Posterior vena cava (tissue), 2 donors: ENCODE measurements at regions of chr1 and their contacts with region 1.

Region 1: DNA sequence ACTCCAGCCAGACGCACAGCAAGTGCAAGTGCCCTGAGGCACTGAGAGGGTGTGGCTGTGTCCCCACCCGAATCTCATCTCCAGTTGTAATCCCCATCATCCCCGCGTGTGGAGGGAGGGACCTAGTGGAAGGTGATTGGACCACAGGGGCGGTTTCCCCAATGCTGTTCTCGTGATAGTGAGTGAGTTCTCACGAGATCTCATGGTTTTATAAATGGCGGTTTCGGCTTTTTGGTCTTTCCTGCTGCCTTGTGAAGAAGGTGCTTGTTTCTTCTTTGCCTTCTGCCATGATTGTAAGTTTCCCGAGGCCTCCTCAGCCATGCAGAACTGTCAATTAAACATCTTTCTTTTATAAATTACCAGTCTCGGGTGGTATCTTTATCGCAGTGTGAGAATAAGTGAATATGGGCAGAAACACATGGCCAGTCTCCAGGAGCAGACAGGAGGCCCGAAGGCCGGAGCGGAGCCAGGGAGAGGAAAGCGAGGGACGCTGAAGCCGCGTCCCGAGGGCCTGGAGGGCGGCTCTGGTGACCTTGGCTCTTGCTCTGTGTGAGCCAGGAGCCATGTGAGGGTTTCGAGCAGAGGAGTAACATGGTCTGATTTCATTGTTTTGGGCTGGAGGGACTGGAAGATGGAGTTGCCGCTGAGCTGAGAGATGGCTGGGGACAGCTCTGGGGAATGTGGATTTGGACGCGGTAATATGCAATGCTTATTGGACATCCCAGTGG is 76.0 kb upstream of the C1orf174 start:
- DNase-seq: no peak

Region 2: GRCh38 chr1:3942818-3943431 is 33.1 kb before region 1 on chr1:
- intact Hi-C with region 1: loop called in 1 of 2 experiments (anchors 1 kb)
- DNase-seq: no peak

Region 3: GRCh38 chr1:4000811-4001251 is 24.8 kb after region 1 on chr1:
- intact Hi-C with region 1: no loop called
- DNase-seq: peak; percentile 46

Region 4: GRCh38 chr1:4101459-4102161 is 125.5 kb after region 1 on chr1:
- intact Hi-C with region 1: no loop called
- DNase-seq: peak; percentile 9